Activated CD4-positive, alpha-beta memory T cell treated with anti-CD3 and anti-CD28 coated beads for 36 hours (primary cell): ENCODE measurements at regions of chr3 and their contacts with region 1.

Region 1: GRCh38 chr3:17032407-17033034 is 147.8 kb downstream of the PLCL2 start:
- DNase-seq: no peak
- H3K4me3 Mint-ChIP-seq: no peak overlapping the region
- H3K27ac Mint-ChIP-seq: no peak overlapping the region
- H3K4me1 Mint-ChIP-seq: peaks cover 72% of the 10 kb centered on the region
- H3K27me3 Mint-ChIP-seq: no peaks in the 10 kb centered on the region

Region 2: GRCh38 chr3:16600780-16601539 is 431.6 kb before region 1 on chr3:
- CTCF ChIA-PET with region 1: interaction called, 5 read pairs
- POLR2A ChIA-PET with region 1: no interaction called
- intact Hi-C with region 1: loop called (anchors 2 kb)
- DNase-seq: peak; percentile 81
- H3K4me3 Mint-ChIP-seq: no peak overlapping the region
- H3K27ac Mint-ChIP-seq: no peak overlapping the region
- H3K4me1 Mint-ChIP-seq: peaks cover 24% of the 10 kb centered on the region
- H3K27me3 Mint-ChIP-seq: peaks cover 10% of the 10 kb centered on the region

Region 3: DNA sequence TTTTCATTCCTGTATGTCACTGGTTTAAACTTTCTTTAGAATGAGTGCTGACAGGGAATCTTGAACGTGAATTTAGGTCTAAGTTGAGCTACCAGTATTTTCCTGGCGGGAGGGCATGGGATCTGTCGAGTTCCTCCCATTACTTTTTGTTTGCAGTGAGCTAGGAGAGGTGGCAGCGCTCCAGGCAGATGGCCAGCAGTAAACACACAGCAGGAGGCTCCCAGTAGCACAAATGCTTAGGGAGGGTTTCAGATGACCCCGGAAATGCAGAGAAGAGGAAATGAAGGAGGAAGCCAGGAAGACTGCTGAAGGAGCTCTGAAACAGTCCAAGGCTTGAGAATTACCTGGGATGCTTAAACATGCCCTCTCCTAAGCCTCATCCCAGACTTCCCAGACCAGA is 38.1 kb after region 1 on chr3:
- CTCF ChIA-PET with region 1: no interaction called
- POLR2A ChIA-PET with region 1: no interaction called
- intact Hi-C with region 1: loop called (anchors 5 kb)
- DNase-seq: no peak
- H3K4me3 Mint-ChIP-seq: no peak overlapping the region
- H3K27ac Mint-ChIP-seq: peak overlapping the region; percentile 7
- H3K4me1 Mint-ChIP-seq: peaks cover 30% of the 10 kb centered on the region
- H3K27me3 Mint-ChIP-seq: no peaks in the 10 kb centered on the region